ENCODE measurements at regions of chr2 and their contacts with region 1.

Region 1: DNA sequence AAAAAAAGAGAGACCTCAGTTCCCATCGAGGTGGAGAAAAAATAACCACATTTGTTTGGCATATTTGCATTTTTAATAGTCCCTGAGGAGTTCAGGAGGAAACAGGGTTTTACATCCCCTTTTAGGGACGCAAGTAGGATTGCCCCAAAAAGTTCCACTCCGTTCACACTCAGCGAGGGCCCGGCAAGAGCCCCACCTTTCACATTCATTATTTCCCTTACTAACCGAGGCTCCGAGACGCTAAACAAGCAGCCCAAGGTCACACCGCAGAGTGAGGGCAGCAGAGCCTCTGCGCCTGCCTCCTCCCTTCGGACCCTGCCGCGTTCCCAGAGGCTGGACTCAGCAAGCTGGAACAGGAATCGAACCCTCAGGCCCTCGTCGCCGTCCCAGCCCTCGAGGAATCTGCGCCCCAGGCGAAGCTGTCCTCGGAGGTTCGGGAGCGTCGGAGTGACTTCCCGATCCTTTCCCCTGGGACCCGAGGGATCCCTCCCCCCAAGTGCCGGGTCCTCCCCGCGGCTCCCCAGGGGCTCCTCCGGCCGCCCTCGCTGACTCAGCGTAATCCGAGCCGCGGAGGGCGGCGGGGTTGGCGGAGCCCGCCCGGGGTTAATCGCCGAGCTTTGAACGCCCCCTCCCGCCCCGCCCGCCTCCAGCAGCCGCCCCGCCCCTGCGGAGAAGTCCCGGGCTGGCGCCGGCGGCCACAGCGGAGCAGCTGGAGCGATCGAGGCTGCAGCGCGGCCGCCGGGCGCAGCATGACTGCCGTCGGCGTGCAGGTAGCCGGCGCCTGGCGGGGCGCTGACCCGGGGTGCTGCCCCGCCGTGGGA is at the start of gene TMEM37:
- DNase-seq: peak; percentile 79
- ATAC-seq: peak; percentile 69
- H3K4me3 Mint-ChIP-seq: peak within 1 kb of the TSS; percentile 87
- H3K27ac Mint-ChIP-seq: peak within 1 kb of the TSS; percentile 85
- H3K4me1 Mint-ChIP-seq: peaks cover 69% of the 10 kb centered on the region
- H3K27me3 Mint-ChIP-seq: peaks cover 25% of the 10 kb centered on the region
- CTCF ChIP-seq: no peak
- total RNA-seq, gene TMEM37: 7.6 to 9.6 TPM (median 8.5 TPM) in 3 replicates

Region 2: GRCh38 chr2:119136093-119136492 is 295.3 kb before region 1 on chr2:
- CTCF ChIA-PET with region 1: no interaction called
- POLR2A ChIA-PET with region 1: no interaction called
- DNase-seq: no peak
- ATAC-seq: peak; percentile 74
- H3K4me3 Mint-ChIP-seq: no peak overlapping the region
- H3K27ac Mint-ChIP-seq: no peak overlapping the region
- H3K4me1 Mint-ChIP-seq: peaks cover 17% of the 10 kb centered on the region
- H3K27me3 Mint-ChIP-seq: peaks cover 9% of the 10 kb centered on the region
- CTCF ChIP-seq: no peak

Region 3: DNA sequence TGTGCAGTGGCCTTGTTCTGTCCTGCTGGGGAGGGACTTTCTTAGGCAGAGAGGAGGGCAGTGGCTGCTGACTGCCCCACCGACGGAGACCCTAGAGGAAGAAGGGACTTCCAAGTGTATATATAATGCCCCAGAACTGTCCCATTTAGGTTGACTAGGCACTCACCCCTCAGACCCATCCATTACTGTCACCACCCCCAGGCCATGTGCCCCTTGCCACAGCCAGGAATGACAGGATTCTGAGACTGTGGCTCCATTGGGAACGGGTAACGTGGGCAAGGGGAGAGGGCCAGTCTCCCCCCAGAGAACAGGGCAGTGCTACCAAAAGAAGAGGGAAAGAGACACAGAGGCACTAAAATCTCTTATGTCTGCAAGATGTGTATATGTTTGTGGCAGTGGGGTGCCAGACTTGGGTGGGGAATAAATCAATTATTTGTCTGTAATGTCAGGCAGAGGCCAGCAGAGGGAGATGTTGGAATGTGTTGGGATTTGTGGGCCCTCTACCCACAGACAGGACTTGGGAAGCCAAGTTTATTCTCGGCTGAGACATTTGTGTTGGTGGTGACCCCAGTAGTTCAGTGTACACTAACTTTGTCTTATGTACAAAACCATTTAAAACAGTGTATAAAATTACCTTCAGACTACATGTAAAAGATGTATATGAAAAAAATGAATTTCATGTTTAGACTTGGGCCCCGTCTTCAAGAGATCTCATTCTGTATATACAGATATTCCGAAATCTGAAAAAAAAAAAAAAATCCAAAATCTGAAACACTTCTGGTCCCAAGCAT is 23.7 kb before region 1 on chr2:
- CTCF ChIA-PET with region 1: interaction called, 11 read pairs
- POLR2A ChIA-PET with region 1: no interaction called
- DNase-seq: peak; percentile 52
- ATAC-seq: peak; percentile 82
- H3K4me3 Mint-ChIP-seq: no peak overlapping the region
- H3K27ac Mint-ChIP-seq: no peak overlapping the region
- H3K4me1 Mint-ChIP-seq: peaks cover 8% of the 10 kb centered on the region
- H3K27me3 Mint-ChIP-seq: no peaks in the 10 kb centered on the region; the same call in 1 of the 2 replicates
- CTCF ChIP-seq: peak; percentile 73

Measured in WTC11 (cell line).